ENCODE measurements at regions of chr2 and their contacts with region 1.

Region 1: GRCh38 chr2:183038341-183039300 is at the start of gene NCKAP1:
- DNase-seq: peak; percentile 63 to 91 (median 81)
- ATAC-seq: peak; percentile 85
- H3K4me3 ChIP-seq: peak within 1 kb of the TSS; percentile 65
- H3K4me3 Mint-ChIP-seq: peak within 1 kb of the TSS; percentile 91
- H3K27ac ChIP-seq: no peak within 1 kb of the TSS
- H3K27ac Mint-ChIP-seq: peak within 1 kb of the TSS; percentile 40
- H3K4me1 ChIP-seq: peaks cover 15% of the 10 kb centered on the region
- H3K4me1 Mint-ChIP-seq: peaks cover 39% of the 10 kb centered on the region
- H3K27me3 ChIP-seq: peaks cover 3 to 55% of the 10 kb centered on the region in 2 experiments
- H3K27me3 Mint-ChIP-seq: peaks cover 32% of the 10 kb centered on the region
- CTCF ChIP-seq: peak; percentile 64
- total RNA-seq, gene NCKAP1: 2.4 to 2.5 TPM

Region 2: GRCh38 chr2:183068561-183068960 is 29.9 kb after region 1 on chr2:
- CTCF ChIA-PET with region 1: no interaction called
- POLR2A ChIA-PET with region 1: no interaction called
- intact Hi-C with region 1: no loop called
- DNase-seq: no peak
- ATAC-seq: no peak
- H3K4me3 ChIP-seq: no peak overlapping the region
- H3K4me3 Mint-ChIP-seq: no peak overlapping the region
- H3K27ac ChIP-seq: no peak overlapping the region
- H3K27ac Mint-ChIP-seq: no peak overlapping the region
- H3K4me1 ChIP-seq: no peaks in the 10 kb centered on the region
- H3K4me1 Mint-ChIP-seq: no peaks in the 10 kb centered on the region
- H3K27me3 ChIP-seq: no peaks in the 10 kb centered on the region
- H3K27me3 Mint-ChIP-seq: peaks cover 28% of the 10 kb centered on the region
- CTCF ChIP-seq: no peak

Region 3: DNA sequence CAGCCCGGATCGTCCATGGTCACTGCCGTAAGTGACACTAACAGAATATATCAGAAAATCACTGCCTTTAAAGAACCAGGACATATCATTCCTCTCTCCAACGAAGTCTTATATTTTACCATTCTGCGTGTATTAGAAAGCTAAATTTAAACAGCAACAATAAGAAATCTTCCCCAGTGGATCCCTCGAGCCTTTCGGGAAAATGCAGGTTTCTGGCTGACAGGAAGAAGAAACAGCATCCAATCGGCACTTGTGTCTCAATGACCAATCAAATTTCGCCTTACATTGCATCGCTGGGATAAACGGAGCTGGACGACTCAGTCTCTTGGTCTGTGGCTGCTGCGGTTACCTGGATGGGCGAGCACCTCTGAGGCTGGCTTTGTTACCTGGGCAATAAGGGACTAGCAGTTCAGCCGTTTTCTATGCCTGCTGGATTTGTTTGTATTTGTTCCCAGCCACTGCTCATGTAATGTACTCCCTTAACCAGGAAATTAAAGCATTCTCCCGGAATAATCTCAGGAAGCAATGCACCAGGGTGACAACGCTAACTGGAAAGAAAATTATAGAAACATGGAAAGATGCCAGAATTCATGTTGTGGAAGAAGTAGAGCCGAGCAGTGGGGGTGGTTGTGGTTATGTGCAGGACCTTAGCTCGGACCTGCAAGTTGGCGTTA is 40.0 kb after region 1 on chr2 and contains the start of gene DUSP19:
- CTCF ChIA-PET with region 1: interaction called, 3 read pairs
- POLR2A ChIA-PET with region 1: no interaction called
- intact Hi-C with region 1: loop called in 1 of 2 experiments (anchors 2 kb)
- DNase-seq: peak; percentile 57 to 90 (median 74)
- ATAC-seq: peak; percentile 75
- H3K4me3 ChIP-seq: peak within 1 kb of the TSS; percentile 76
- H3K4me3 Mint-ChIP-seq: peak within 1 kb of the TSS; percentile 93
- H3K27ac ChIP-seq: no peak within 1 kb of the TSS
- H3K27ac Mint-ChIP-seq: peak within 1 kb of the TSS; percentile 64
- H3K4me1 ChIP-seq: peaks cover 6% of the 10 kb centered on the region
- H3K4me1 Mint-ChIP-seq: peaks cover 13% of the 10 kb centered on the region
- H3K27me3 ChIP-seq: no peaks in the 10 kb centered on the region
- H3K27me3 Mint-ChIP-seq: no peaks in the 10 kb centered on the region
- CTCF ChIP-seq: no peak
- total RNA-seq, gene DUSP19: 0.14 to 0.50 TPM

Measured in CD4-positive, alpha-beta T cell (primary cell).